K562 (cell line): ENCODE measurements at regions of chr12 and their contacts with region 1.

Region 1: DNA sequence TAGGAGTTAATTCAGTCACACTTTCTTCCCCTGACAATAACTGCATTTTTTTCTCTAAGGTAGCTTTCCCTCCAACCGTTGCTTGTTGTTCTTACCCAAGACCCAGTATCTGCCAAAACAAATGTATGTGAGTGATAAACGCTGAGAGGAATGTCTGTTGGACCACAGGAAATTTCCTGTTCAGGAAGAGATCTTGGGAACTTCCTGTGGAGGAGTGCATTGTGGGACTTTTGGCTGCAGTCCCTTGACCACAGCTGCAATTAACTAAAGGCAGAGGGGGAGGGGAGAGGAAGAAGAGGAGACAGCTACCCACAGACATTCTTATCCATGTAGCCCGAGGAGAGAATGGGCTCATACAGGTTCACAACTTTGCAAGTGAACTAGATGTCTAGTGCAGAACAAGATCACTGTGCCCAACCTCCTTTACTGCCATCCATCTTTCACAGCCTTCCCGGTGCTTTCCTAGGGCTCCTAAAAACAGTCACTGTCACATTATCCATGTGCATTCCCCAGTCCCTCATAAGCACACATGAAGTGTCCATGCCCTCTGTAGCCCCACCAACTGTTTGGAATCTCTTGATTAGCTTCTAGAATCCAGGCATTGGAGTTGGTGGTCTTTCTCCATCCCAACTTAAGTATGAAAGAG is 149.5 kb downstream of the ETV6 start:
- DNase-seq: peak; percentile 19 to 71 (median 36)
- ATAC-seq: peak; percentile 81
- H3K4me3 ChIP-seq: no peak overlapping the region
- H3K27ac ChIP-seq: peak overlapping the region; percentile 78
- H3K4me1 ChIP-seq: peaks cover 6 to 53% of the 10 kb centered on the region in 2 experiments; a peak in 4 of 5 replicates
- H3K27me3 ChIP-seq: no peaks in the 10 kb centered on the region
- CTCF ChIP-seq: no peak
- EP300 ChIP-seq: peak; percentile 98
- POLR2A ChIP-seq: no peak
- RAD21 ChIP-seq: peak in 1 of 2 experiments; percentile 15; a peak in 2 of 4 replicates

Region 2: GRCh38 chr12:11649703-11650521 is 149.1 kb before region 1 on chr12:
- CTCF ChIA-PET with region 1: no interaction called
- POLR2A ChIA-PET with region 1: no interaction called
- in situ Hi-C with region 1: no loop called
- intact Hi-C with region 1: loop called (anchors 5 kb)
- DNase-seq: peak; percentile 22 to 70 (median 58)
- ATAC-seq: peak; percentile 39
- H3K4me3 ChIP-seq: peak overlapping the region; percentile 77
- H3K27ac ChIP-seq: peak overlapping the region; percentile 99
- H3K4me1 ChIP-seq: peaks cover 0 to 5% of the 10 kb centered on the region in 2 experiments; a peak in 3 of 5 replicates
- H3K27me3 ChIP-seq: no peaks in the 10 kb centered on the region
- CTCF ChIP-seq: no peak
- EP300 ChIP-seq: no peak
- POLR2A ChIP-seq: no peak
- RAD21 ChIP-seq: no peak

Region 3: DNA sequence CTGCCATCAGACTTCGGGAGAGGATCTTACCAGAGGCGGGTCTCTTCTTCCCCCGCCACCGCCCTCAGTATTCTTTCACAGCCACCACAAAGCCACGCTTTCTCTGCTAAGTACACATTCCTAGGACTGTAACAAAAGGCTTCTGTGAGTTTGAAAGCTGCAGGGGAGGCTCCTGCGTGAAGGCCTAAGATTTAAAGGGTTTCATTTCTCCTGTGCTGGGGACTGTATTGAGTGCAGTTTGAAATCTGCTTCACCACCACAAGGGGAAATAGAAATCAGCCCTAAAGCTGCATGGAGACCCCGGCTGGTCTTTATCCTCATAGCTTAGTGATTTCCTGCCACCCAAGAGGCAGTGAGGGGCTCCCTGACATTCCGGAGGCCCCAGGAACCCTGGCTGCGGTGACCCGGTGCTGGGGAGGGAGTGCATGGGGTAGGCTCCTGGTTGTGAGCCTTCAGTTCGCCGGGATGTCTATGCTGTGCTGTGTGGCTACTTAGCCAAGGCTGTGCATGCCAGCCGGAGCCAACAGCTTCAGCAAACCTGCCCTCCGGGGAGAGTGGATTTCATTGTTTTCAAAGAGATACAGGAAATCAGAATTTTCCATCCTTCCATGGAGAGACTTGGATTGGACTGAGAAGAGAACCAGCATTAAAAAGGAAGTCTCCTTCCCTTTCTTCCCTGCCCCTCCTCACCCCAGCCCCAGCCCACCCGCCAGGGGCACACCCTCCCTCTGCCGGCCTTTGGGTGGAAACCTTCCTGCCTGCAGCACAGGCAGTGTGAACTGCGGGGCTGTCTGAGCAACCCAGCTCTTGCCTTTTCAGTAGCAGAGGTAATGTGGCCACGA is 13.8 kb after region 1 on chr12:
- CTCF ChIA-PET with region 1: no interaction called
- POLR2A ChIA-PET with region 1: interaction called, 10 read pairs
- in situ Hi-C with region 1: no loop called
- intact Hi-C with region 1: no loop called
- DNase-seq: no peak
- ATAC-seq: peak; percentile 55
- H3K4me3 ChIP-seq: no peak overlapping the region
- H3K27ac ChIP-seq: no peak overlapping the region
- H3K4me1 ChIP-seq: peaks cover 0 to 4% of the 10 kb centered on the region in 2 experiments; a peak in 2 of 5 replicates
- H3K27me3 ChIP-seq: no peaks in the 10 kb centered on the region
- CTCF ChIP-seq: no peak
- EP300 ChIP-seq: no peak
- POLR2A ChIP-seq: no peak
- RAD21 ChIP-seq: no peak